ENCODE measurements at regions of chrX and their contacts with region 1.

Region 1: GRCh38 chrX:110847334-110847733 is 51.7 kb upstream of the CHRDL1 start:
- DNase-seq: no peak
- H3K4me3 ChIP-seq: no peak overlapping the region
- H3K27ac ChIP-seq: no peak overlapping the region
- H3K4me1 ChIP-seq: no peaks in the 10 kb centered on the region
- H3K27me3 ChIP-seq: no peaks in the 10 kb centered on the region
- CTCF ChIP-seq: peak; percentile 46 to 66 (median 62)
- POLR2A ChIP-seq: no peak

Region 2: DNA sequence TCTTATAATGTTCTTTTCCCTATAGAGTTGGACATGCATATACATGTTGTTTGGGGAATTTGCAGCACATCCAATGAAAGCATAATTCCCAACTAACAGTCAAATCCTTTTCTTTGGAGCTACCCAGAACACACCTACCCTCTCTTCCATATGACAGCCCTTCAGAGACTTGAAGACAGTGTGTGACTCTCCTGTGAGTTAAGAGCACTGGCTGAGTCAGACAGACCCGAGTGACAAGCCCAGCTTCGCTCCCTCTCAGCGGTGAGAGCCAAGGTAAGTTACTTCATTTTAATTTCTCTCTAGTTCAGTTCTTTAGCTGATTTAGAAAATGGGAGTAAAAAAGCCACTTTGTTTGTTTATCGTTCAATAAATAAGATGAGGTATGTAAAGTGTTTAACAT is 402.3 kb before region 1 on chrX:
- intact Hi-C with region 1: loop called (anchors 5 kb)
- DNase-seq: no peak
- H3K4me3 ChIP-seq: no peak overlapping the region
- H3K27ac ChIP-seq: no peak overlapping the region
- H3K4me1 ChIP-seq: no peaks in the 10 kb centered on the region
- H3K27me3 ChIP-seq: no peaks in the 10 kb centered on the region
- CTCF ChIP-seq: no peak
- POLR2A ChIP-seq: no peak

Region 3: DNA sequence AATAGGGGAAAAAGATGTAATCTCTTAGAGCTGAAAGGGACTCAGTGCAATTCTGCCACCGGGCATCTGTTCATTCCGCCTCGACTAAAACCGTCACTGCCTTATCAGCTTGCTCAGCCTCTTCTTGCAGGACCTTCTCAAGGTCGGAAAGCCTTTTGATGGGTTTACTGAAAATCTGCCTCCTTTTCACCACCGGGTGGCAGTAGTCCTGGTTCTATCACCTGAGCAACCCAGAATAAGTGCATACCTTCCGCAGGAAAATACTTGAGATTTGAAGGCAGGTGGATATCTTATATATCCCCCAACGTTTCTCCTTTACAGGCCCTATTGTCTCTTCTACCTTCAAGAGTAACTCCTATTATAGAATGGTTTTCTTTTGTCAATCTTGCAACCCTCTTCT is 145.3 kb after region 1 on chrX:
- intact Hi-C with region 1: no loop called
- DNase-seq: no peak
- H3K4me3 ChIP-seq: no peak overlapping the region
- H3K27ac ChIP-seq: no peak overlapping the region
- H3K4me1 ChIP-seq: no peaks in the 10 kb centered on the region
- H3K27me3 ChIP-seq: peaks cover 0 to 5% of the 10 kb centered on the region in 2 donors
- CTCF ChIP-seq: peak in 2 of 4 experiments; percentile 15 to 20
- POLR2A ChIP-seq: no peak

Measured in uterus (tissue), 4 donors.